ENCODE measurements at regions of chr9 and their contacts with region 1.

Region 1: GRCh38 chr9:757246-757881 is 84.1 kb upstream of the DMRT1 start:
- DNase-seq: no peak
- H3K4me3 Mint-ChIP-seq: no peak overlapping the region
- H3K27ac Mint-ChIP-seq: no peak overlapping the region
- H3K4me1 Mint-ChIP-seq: peaks cover 25% of the 10 kb centered on the region
- H3K27me3 Mint-ChIP-seq: peaks cover 2% of the 10 kb centered on the region

Region 2: GRCh38 chr9:503881-504852 is 253.2 kb before region 1 on chr9:
- intact Hi-C with region 1: loop called (anchors 10 kb)
- DNase-seq: peak; percentile 94
- H3K4me3 Mint-ChIP-seq: peak within 1 kb of the TSS; percentile 81
- H3K27ac Mint-ChIP-seq: peak within 1 kb of the TSS; percentile 55
- H3K4me1 Mint-ChIP-seq: peaks cover 8% of the 10 kb centered on the region
- H3K27me3 Mint-ChIP-seq: peaks cover 52% of the 10 kb centered on the region

Region 3: GRCh38 chr9:1522219-1522767 is 764.9 kb after region 1 on chr9:
- intact Hi-C with region 1: no loop called
- DNase-seq: no peak
- H3K4me3 Mint-ChIP-seq: no peak overlapping the region
- H3K27ac Mint-ChIP-seq: no peak overlapping the region
- H3K4me1 Mint-ChIP-seq: no peaks in the 10 kb centered on the region
- H3K27me3 Mint-ChIP-seq: no peaks in the 10 kb centered on the region